PC-9 (cell line): ENCODE measurements at regions of chr2 and their contacts with region 1.

Region 1: GRCh38 chr2:113390124-113390849 is 47.2 kb upstream of the ZNG1B start:
- DNase-seq: peak; percentile 59 to 63
- H3K4me3 ChIP-seq: no peak overlapping the region
- H3K27ac ChIP-seq: peak overlapping the region; percentile 56
- H3K4me1 ChIP-seq: peaks cover 5% of the 10 kb centered on the region
- H3K27me3 ChIP-seq: no peaks in the 10 kb centered on the region
- CTCF ChIP-seq: peak; percentile 94

Region 2: DNA sequence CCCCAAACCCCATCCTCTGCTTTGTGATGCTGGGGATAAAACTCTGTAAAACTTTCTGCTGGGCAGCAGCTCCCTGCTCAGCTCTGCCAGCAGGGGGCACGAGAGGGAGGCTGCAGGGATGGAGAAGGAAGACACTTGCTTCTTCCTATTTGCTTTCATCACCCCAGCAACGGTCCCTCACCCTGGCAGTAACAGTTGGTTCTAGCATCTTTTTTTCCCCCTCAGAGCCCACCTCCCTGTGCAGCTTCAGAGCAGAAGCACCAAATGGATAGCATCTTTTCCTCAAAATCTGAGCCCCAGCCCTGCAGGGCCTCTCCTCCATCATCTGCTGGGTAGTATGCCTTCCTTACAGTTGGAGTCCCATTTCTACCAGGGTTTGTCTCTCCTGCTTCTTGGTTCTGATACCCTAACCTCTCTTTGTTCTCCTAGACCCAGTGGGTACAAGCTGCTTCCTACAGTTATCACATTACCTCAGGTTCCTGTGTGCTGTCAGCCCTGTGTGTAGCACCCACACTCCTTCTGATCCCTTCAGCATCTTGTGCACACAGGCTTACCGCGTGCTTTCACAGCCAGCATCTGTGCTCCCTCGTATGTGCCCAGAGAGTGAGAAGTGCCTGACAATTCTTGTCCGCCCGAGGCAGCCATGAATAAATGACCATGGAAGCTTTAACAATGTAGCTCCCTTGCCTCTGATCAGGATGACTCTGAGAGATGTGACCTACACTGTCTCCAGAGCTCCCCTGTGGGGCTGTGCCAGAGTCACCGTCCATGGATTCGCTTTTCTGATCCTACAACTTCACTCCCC is 640.3 kb before region 1 on chr2:
- CTCF ChIA-PET with region 1: no interaction called
- POLR2A ChIA-PET with region 1: no interaction called
- intact Hi-C with region 1: loop called (anchors 10 kb)
- DNase-seq: peak in 1 of 2 experiments; percentile 70
- H3K4me3 ChIP-seq: no peak overlapping the region
- H3K27ac ChIP-seq: no peak overlapping the region
- H3K4me1 ChIP-seq: no peaks in the 10 kb centered on the region
- H3K27me3 ChIP-seq: no peaks in the 10 kb centered on the region
- CTCF ChIP-seq: peak; percentile 94

Region 3: GRCh38 chr2:112958428-112959108 is 431.7 kb before region 1 on chr2:
- CTCF ChIA-PET with region 1: no interaction called
- POLR2A ChIA-PET with region 1: no interaction called
- intact Hi-C with region 1: loop called (anchors 10 kb)
- DNase-seq: peak in 1 of 2 experiments; percentile 40
- H3K4me3 ChIP-seq: no peak overlapping the region
- H3K27ac ChIP-seq: no peak overlapping the region
- H3K4me1 ChIP-seq: peaks cover 7% of the 10 kb centered on the region; the same call in 1 of the 2 replicates
- H3K27me3 ChIP-seq: no peaks in the 10 kb centered on the region
- CTCF ChIP-seq: peak; percentile 93

Region 4: DNA sequence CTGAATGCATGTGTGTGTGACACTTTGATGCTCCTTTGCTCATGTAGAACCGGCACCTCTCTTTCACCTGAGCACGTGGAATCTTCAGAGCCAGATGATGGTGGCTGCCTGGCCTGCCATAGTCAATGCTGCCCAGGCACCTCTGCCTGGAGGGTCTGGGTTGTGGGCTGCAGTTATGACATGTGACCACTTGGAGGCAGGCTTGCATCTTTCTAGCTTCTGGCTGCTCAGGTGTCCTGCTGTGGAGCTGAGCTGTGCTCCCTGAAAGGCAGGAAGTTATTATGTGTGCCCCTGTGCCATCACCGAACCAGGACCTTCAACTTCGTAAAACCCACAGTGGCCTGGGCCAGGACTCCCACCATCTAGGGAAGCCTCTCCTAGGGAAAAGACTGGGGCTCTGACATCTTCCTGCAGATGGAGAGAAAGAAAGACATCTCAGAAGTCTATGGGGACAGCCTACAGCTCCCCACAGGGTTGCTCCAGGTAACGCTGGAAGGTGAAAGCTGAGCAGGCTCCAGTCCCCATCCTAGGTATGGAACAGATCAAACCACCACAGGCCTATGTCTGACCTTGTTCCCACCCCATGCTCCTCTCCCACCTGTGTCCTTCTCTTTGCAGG is 186.3 kb before region 1 on chr2:
- CTCF ChIA-PET with region 1: interaction called, 8 read pairs
- POLR2A ChIA-PET with region 1: no interaction called
- intact Hi-C with region 1: loop called (anchors 5 kb)
- DNase-seq: peak; percentile 64 to 79
- H3K4me3 ChIP-seq: no peak overlapping the region
- H3K27ac ChIP-seq: no peak overlapping the region
- H3K4me1 ChIP-seq: peaks cover 6% of the 10 kb centered on the region; the same call in 1 of the 2 replicates
- H3K27me3 ChIP-seq: no peaks in the 10 kb centered on the region
- CTCF ChIP-seq: peak; percentile 94

Region 5: GRCh38 chr2:113248997-113249770 is 141.1 kb before region 1 on chr2:
- CTCF ChIA-PET with region 1: no interaction called
- POLR2A ChIA-PET with region 1: no interaction called
- intact Hi-C with region 1: loop called (anchors 5 kb)
- DNase-seq: peak in 1 of 2 experiments; percentile 73
- H3K4me3 ChIP-seq: no peak overlapping the region
- H3K27ac ChIP-seq: no peak overlapping the region
- H3K4me1 ChIP-seq: 0 out of 2 replicates have a peak, but pooled peaks cover 4% of the 10 kb centered on the region
- H3K27me3 ChIP-seq: no peaks in the 10 kb centered on the region
- CTCF ChIP-seq: peak; percentile 97

Region 6: GRCh38 chr2:113257516-113258264 is 132.6 kb before region 1 on chr2:
- CTCF ChIA-PET with region 1: interaction called, 10 read pairs
- POLR2A ChIA-PET with region 1: no interaction called
- intact Hi-C with region 1: no loop called
- DNase-seq: no peak
- H3K4me3 ChIP-seq: no peak overlapping the region
- H3K27ac ChIP-seq: no peak overlapping the region
- H3K4me1 ChIP-seq: no peaks in the 10 kb centered on the region
- H3K27me3 ChIP-seq: no peaks in the 10 kb centered on the region
- CTCF ChIP-seq: no peak

Region 7: DNA sequence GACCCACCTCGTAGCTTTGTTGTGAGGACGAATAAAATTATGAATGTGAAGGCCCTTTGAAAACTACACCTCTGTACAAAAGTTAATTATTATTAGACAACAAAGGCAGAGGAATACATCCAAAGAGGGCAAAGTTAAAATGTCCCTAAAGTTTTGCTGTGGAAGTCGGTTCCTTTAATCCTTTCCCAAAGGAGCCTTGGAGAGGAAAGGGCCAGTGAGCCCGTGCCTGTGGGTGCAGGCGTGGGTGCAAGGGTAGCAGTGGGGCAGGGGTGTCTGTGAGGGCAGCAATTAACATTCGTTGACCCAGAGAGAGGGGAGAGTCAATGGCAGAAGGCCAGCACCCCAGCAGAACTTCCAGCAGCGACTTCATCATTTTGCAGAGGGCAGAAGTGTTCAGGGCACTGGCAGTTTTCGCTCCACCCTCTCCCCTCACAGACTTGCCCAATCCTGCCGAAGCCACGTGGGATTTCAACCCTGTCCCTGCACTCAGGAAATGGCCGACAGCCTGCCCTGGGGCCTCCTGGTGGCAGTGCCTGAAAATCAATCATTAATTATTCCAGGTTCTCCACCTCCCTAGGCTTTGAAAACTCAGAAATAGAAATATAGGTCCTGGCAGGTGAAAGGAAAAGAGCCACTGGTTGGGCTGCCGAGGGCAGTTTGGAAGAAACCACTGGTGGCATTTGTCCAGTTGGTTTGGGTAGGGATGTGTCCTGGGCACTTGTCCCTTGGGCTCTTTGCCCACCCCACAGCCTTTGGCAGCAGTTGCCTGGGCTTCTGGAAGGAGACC is 107.3 kb before region 1 on chr2:
- CTCF ChIA-PET with region 1: no interaction called
- POLR2A ChIA-PET with region 1: no interaction called
- intact Hi-C with region 1: no loop called
- DNase-seq: peak; percentile 62 to 79
- H3K4me3 ChIP-seq: no peak overlapping the region
- H3K27ac ChIP-seq: peak overlapping the region; percentile 99
- H3K4me1 ChIP-seq: peaks cover 65% of the 10 kb centered on the region
- H3K27me3 ChIP-seq: no peaks in the 10 kb centered on the region
- CTCF ChIP-seq: peak; percentile 54; the same call in 1 of the 2 replicates